Transverse colon (tissue), 4 donors: ENCODE measurements at regions of chrX and their contacts with region 1.

Region 1: DNA sequence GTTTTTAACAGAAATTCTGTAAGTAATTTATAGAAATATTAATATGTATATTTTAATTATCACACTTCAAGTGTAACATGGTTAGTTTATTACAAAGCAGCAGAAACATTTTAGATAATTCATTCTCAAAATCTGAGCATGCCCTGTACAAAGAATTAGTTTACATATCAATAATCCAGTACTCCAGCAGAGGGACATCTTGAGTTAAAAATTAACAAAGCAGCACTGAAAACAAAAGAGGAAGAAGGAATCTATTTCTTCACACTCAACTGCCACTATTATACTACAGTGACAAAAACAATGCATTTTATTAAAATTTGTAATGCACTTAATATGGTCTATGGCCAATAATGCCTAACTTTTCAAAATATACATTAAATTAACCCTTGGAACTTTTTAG is 179.1 kb upstream of the KLHL4 start:
- DNase-seq: no peak
- H3K4me3 ChIP-seq: no peak overlapping the region
- H3K27ac ChIP-seq: no peak overlapping the region
- H3K4me1 ChIP-seq: no peaks in the 10 kb centered on the region
- H3K27me3 ChIP-seq: no peaks in the 10 kb centered on the region
- CTCF ChIP-seq: peak in 1 of 5 experiments; percentile 16
- EP300 ChIP-seq: no peak
- POLR2A ChIP-seq: no peak

Region 2: DNA sequence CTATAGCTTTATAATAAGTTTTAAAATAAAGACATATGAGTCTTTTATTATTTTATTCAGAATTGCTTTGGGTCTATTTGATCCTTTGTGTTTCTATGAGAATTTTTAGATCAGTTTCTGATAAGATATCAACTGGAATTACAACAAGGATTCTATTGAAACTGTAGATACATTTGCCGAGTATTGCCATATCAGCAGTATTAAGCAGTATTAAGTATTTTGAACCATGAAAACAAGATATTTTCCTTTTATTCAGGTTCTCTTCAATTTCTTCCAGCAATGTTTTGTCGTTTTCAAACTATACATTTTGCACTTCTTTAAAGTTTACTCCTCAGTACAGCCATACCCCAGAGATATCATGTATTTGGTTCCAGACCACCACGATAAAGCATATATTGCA is 591.4 kb before region 1 on chrX:
- in situ Hi-C with region 1: no loop called
- intact Hi-C with region 1: no loop called
- DNase-seq: no peak
- H3K4me3 ChIP-seq: no peak overlapping the region
- H3K27ac ChIP-seq: no peak overlapping the region
- H3K4me1 ChIP-seq: no peaks in the 10 kb centered on the region
- H3K27me3 ChIP-seq: no peaks in the 10 kb centered on the region
- CTCF ChIP-seq: no peak
- EP300 ChIP-seq: no peak
- POLR2A ChIP-seq: no peak

Region 3: DNA sequence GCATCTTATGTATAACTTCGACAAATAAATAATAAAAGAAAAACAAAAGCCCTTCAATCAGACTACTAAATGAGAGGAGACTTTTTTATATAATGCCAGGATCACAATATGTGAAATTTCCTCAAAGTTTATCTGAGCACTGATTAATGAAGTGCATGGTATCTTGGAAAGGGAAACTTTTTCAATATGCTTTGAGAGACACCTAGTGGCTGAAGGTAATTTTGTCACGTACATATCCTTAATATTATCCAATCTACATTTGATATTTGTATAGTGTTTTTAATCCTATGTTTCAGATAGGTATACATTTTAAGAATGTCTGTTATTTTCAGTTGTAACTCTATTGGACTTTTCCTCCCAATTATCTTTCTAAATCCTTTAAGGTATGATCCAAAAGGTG is 325.9 kb after region 1 on chrX:
- in situ Hi-C with region 1: loop called in 1 of 4 experiments (anchors 25 kb)
- intact Hi-C with region 1: no loop called
- DNase-seq: no peak
- H3K4me3 ChIP-seq: no peak overlapping the region
- H3K27ac ChIP-seq: no peak overlapping the region
- H3K4me1 ChIP-seq: no peaks in the 10 kb centered on the region
- H3K27me3 ChIP-seq: no peaks in the 10 kb centered on the region
- CTCF ChIP-seq: peak in 1 of 5 experiments; percentile 24
- EP300 ChIP-seq: no peak
- POLR2A ChIP-seq: no peak